ENCODE measurements at regions of chr9 and their contacts with region 1.

Region 1: GRCh38 chr9:92877531-92878430 is at the start of gene ZNF484:
- DNase-seq: peak; percentile 83
- ATAC-seq: peak; percentile 96
- H3K4me3 Mint-ChIP-seq: peak within 1 kb of the TSS; percentile 99
- H3K27ac Mint-ChIP-seq: peak within 1 kb of the TSS; percentile 99
- H3K4me1 Mint-ChIP-seq: peaks cover 28% of the 10 kb centered on the region
- H3K27me3 Mint-ChIP-seq: no peaks in the 10 kb centered on the region
- CTCF ChIP-seq: no peak
- total RNA-seq, gene ZNF484: 12.2 and 14.0 TPM in 2 replicates

Region 2: DNA sequence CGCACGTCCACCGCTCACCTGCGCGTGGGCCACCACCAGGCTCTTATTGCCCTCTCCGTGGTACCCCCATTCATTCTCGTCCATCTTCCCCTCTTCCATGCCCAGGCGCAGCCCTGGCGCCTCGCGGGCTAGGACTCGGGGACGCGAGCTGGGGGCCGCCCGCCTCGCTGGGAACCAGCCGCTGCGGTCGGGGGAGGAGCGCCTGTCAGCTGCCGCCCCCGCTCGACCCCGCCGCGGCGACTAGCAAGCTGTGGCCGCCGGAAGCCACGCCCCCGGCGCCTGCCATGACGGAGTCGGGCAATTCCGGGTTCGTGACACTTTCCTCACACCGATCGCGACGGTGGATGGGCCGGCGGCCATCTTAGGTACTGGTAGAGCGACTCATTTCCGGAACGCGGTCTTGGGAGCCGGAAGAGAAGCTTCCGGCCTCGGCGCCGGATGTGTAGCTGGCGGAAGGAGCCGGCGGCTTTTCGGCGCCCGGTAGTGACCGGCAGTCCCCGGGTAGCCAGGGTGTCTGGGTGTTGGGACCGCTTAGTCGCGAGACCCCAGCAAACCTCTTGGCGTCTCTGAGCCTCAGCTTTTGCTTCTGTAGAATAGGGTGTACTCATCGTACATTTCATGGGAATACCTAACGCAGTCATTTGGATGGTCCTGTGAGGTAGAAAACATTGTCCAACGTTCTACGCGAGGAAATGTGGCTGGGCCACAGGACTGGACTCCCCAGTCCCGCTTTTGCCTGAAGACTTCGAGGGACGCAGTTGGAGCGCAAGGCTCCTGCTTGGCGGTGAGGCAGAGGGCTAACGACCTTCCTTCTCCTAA is 207.7 kb before region 1 on chr9 and contains the start of gene IPPK:
- CTCF ChIA-PET with region 1: no interaction called
- POLR2A ChIA-PET with region 1: no interaction called
- intact Hi-C with region 1: loop called (anchors 1 kb)
- DNase-seq: peak; percentile 94
- ATAC-seq: peak; percentile 93
- H3K4me3 Mint-ChIP-seq: peak within 1 kb of the TSS; percentile 96
- H3K27ac Mint-ChIP-seq: peak within 1 kb of the TSS; percentile 94
- H3K4me1 Mint-ChIP-seq: peaks cover 25% of the 10 kb centered on the region
- H3K27me3 Mint-ChIP-seq: no peaks in the 10 kb centered on the region
- CTCF ChIP-seq: no peak
- total RNA-seq, gene IPPK: 9.7 and 9.8 TPM in 2 replicates

Region 3: DNA sequence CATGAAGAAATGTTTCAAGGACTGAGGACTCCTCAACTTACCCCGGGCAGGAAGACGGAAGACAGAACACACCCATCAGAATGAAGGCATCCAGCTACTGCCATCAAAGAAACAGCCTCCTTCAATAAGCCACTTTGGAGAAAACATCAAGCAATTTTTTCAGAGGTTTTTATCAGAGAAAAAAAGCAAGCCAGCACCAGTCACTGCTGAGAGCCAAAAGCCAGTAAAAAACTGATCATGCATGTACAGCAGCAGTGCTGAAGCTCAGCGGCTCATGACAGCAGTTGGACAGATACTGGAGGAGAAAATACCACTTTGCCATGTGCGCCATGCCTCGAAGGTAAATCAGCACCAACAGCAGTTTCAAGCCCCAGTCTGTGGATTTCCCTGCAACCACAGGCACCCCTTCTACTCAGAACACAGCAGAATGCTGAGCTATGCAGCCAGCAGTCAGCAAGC is 10.1 kb after region 1 on chr9:
- CTCF ChIA-PET with region 1: no interaction called
- POLR2A ChIA-PET with region 1: no interaction called
- intact Hi-C with region 1: no loop called
- DNase-seq: no peak
- ATAC-seq: no peak
- H3K4me3 Mint-ChIP-seq: no peak overlapping the region
- H3K27ac Mint-ChIP-seq: no peak overlapping the region
- H3K4me1 Mint-ChIP-seq: no peaks in the 10 kb centered on the region
- H3K27me3 Mint-ChIP-seq: peaks cover 26% of the 10 kb centered on the region
- CTCF ChIP-seq: no peak

Region 4: DNA sequence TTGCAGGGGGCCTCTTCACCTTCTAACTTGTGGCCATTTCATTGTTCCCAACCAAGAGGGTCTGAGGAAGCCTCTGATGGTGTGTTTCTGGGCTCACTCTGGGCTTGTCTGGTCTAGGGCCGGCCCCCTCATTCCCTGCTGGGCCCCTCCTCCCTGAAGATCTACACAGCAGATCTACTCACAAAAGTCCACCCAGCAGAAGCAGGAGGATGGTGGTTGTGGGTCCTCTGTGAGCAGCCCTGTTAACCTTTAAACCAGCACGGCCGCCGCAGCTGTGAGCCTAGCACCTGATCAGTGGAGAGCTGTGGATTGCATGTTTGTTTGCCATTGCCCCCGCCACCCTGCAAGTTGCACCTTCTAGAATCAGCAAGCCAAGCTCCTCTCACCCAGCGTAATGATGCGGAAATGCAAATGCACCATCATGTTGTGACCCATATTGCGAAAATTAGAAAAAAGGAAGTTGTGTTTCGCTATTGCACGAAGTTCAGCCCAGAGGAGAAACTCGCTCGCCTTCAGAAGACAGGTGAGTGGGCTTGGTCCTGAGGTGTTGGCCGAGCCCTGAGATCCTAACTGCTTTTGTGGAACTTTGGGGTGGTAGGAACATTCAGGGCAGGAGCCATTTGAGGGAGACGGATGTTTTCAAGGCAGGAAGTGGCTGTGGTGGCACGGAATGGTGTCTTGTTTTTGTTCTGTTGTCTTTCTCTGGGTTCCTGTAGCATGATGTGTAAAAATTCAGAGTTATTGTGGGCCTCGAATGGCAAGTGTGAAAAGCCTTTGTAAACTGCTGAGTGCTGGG is 86.2 kb after region 1 on chr9:
- CTCF ChIA-PET with region 1: no interaction called
- POLR2A ChIA-PET with region 1: no interaction called
- intact Hi-C with region 1: loop called (anchors 1 kb)
- DNase-seq: peak; percentile 56
- ATAC-seq: peak; percentile 82
- H3K4me3 Mint-ChIP-seq: peak overlapping the region; percentile 94
- H3K27ac Mint-ChIP-seq: peak overlapping the region; percentile 99
- H3K4me1 Mint-ChIP-seq: peaks cover 69% of the 10 kb centered on the region
- H3K27me3 Mint-ChIP-seq: no peaks in the 10 kb centered on the region
- CTCF ChIP-seq: no peak

Region 5: DNA sequence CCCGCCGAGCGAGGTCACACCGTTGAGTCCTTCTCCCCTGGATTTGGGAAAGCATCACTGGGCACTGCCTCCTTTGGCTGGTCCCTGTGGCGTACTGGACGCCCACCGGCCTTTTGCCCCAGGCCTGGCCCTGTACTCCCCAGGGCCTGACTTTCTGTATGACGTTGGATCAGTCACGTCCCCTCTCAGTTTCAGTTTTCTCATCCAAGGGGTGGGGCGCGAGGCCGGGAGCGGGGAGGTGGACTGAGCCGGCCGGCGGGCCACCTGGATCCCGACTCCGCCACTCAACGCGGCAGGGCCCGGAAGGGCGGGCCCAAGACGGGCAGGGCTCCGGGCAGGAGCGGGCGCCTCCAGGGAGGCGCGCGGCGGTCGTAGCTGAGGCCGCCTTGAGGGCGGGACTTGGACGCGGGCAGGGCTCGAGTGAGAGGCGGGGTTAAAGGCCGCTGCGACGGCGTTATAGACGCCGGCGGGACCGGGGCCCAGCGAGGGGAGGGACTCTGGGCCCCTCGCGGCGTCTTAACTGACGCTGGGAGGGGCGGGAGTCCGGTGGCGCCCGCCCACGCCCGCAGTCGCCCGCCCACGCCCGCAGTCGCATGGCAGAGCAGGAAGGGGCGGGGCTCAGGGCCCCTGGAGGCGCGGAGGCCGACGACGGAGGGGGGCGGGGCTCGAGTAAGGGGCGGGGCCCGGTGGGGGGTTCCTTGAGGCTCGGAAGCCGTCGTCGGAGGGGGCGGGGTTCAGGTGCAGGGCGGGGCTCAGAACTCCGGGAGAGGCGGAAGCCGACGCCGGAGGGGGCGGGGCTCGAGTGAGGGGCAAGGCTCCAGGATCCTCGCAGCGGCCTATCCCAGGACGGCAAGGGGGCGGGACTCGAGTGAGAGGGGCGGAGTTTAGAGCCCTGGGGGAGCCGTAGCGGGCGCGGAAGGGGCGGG is 217.7 kb after region 1 on chr9:
- CTCF ChIA-PET with region 1: no interaction called
- POLR2A ChIA-PET with region 1: no interaction called
- intact Hi-C with region 1: loop called (anchors 1 kb)
- DNase-seq: peak; percentile 100
- ATAC-seq: peak; percentile 79
- H3K4me3 Mint-ChIP-seq: peak overlapping the region; percentile 86
- H3K27ac Mint-ChIP-seq: peak overlapping the region; percentile 99
- H3K4me1 Mint-ChIP-seq: peaks cover 83% of the 10 kb centered on the region
- H3K27me3 Mint-ChIP-seq: no peaks in the 10 kb centered on the region
- CTCF ChIP-seq: no peak

Region 6: DNA sequence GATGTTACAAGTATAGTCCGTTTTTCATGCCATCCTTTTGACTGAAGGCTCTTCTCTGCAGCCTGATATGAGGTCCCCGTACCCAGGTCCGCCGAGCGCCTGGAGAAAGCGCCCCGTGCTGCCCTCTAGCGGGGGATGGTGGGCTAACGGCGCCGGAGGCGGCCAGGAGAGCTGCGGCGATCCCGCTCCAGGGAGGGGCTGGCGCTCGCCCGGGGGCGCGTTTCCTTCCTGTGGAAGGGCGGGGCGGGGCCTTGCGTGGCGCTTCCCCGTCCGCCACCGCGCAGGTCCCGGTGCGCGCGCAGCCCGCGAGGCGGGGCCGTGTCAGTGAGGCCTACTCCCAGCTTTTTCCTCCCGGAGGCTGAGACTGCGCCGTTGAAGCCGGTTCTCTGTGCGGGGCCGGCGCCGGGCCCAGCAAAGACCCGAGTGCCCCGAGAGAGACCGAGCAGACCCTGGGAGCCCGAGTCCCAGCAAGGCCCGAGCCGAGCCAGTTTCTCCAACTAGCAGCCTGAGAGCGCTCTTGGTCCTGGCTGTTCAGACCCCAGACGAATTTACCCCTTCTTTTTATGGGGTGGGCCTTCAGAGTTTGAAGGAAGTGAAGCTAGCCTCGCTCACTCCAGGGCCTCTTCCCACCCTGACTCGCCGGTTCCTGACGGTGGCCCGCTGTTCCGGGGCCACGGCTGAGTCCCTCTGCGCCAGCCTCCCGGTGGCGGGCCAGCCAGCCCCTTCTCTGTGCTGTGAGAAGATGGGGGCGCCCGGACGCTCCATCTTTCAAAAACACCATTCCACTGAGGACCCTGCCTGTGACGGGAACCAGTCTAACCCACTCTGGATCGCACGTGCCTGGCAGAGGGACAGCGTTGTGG is 688.9 kb after region 1 on chr9:
- CTCF ChIA-PET with region 1: no interaction called
- POLR2A ChIA-PET with region 1: interaction called, 3 read pairs
- intact Hi-C with region 1: loop called (anchors 5 kb)
- DNase-seq: peak; percentile 100
- ATAC-seq: peak; percentile 98
- H3K4me3 Mint-ChIP-seq: peak overlapping the region; percentile 86
- H3K27ac Mint-ChIP-seq: peak overlapping the region; percentile 92
- H3K4me1 Mint-ChIP-seq: peaks cover 33% of the 10 kb centered on the region
- H3K27me3 Mint-ChIP-seq: no peaks in the 10 kb centered on the region
- CTCF ChIP-seq: peak; percentile 37

Region 7: DNA sequence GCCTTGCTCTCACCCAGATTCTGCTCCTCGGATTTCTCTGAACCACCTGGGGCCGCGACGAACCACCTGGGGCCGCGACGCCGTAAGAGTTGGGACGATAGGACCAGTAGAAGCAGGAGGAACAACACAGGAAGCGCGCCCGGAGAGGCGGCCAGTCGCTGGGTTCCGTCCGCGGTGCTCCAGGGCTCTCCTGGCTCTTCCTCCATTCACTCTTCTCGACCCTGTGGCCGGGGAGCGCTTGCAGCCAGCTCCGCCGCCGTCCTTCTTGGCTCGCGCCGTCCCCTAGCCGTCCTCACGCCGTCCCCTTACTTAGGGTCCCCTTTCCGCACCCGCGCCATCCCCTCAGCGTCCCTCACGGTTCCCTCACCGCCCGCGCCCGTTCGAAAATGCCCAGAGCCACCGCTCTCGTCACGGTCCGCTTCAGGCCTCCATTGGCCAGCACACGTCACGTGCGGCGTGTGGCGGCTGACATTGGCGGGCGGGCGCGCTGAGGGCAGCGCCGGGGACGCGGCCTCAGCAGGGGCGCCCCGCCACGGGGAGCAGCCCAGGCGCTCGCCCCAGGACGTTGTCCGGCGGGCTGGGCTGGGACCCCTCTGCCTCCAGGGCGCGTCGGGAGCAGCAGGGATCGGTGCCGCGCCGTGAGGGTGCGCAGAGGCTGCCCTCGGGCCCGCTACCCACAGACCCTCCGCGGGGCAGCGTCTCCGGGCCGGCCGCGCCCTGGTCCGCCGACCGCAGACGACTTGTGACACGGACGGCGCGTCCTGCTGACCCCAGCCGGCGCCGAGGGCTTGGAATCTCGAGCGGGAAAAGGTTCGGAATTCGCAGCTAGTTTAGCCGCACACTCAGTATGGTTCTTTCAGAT is 1152.8 kb after region 1 on chr9:
- CTCF ChIA-PET with region 1: no interaction called
- POLR2A ChIA-PET with region 1: no interaction called
- intact Hi-C with region 1: loop called (anchors 5 kb)
- DNase-seq: peak; percentile 74
- ATAC-seq: peak; percentile 98
- H3K4me3 Mint-ChIP-seq: peak overlapping the region; percentile 91
- H3K27ac Mint-ChIP-seq: peak overlapping the region; percentile 91
- H3K4me1 Mint-ChIP-seq: peaks cover 19% of the 10 kb centered on the region
- H3K27me3 Mint-ChIP-seq: no peaks in the 10 kb centered on the region
- CTCF ChIP-seq: no peak